Transverse colon (tissue), 4 donors: ENCODE measurements at regions of chr5 and their contacts with region 1.

Region 1: DNA sequence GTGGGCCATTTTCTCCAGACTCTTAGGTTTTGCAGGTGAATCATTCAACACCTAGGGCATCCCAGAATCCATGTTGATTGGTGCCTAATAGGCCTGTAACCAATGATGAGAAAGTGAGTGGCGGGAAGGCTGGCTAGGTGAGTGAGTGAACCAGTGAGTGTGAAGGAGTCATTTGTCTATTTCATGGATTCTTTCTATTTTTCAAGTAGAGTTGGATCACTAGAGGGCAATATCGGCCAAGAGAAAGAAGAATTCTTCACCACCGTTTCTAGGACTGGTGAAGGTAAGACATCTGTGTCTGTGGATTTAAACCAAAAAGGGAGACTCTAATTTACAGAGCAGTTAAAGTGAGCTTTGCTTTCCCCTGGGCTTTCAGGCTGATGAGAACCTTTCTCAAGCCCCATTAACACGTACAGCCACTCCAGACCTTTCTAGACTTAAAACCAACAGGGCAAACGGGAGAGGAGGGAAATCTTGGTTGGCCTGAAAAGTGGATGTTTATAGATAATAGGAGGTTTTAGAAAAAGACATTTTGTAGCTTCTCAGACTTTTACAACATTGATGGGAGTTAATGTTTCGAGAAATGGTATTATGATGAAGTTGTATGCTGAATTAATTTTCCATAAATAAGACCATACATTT is 114.3 kb upstream of the IL12B start:
- DNase-seq: no peak
- H3K4me3 ChIP-seq: no peak overlapping the region
- H3K27ac ChIP-seq: no peak overlapping the region
- H3K4me1 ChIP-seq: no peaks in the 10 kb centered on the region
- H3K27me3 ChIP-seq: no peaks in the 10 kb centered on the region
- CTCF ChIP-seq: peak in 2 of 5 experiments; percentile 29 to 32
- EP300 ChIP-seq: no peak
- POLR2A ChIP-seq: no peak

Region 2: DNA sequence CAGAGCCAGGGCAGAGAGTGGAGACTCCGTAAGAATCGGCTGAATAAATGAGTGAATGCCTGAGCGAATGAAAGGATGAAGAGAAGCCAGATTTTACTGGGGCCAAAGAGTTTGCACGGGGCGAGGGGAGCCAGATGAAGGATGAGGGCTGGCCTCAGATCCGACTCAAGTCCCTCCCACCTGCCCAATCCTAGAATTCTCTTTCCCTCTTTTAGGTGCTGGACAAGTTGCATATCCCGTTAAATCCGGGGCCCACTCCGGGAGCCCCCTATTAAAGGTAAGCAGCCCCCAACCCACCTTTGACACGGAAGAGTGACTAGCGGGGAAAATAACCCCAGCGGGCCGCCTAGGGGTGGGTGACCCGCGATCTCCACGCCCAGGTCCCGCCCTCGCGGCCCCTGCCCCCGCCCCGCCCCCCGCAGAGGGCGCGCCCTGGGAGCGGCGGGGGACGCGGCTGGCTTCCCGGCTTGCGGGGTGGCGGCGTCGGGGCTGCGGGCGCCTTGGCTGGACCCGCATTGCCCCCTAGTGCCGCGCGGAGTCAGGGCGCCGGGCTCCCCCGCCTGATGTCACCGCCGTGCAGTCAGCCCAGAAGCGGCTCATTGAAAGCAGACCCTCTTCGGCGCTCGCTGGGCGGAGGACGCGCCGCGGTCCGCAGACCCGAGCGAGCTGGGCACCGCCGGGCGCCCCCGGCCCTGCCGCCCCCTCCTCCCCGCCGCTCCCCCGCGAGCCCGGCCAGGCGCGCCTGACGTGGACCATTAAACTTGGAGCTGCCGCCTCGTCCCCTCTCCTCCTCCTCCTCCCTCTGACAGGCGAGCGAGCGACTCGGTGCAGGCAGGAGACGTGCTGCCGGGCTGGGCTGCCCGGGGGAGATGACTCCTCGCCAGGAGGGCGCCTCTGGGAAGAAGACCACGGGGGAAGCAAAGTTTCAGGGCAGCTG is 471.6 kb after region 1 on chr5 and contains the start of gene ADRA1B:
- in situ Hi-C with region 1: loop called in 1 of 4 experiments (anchors 10 kb)
- intact Hi-C with region 1: no loop called
- DNase-seq: peak; percentile 76
- H3K4me3 ChIP-seq: peak within 1 kb of the TSS in 3 of 4 donors; percentile 31 to 52 (median 45)
- H3K27ac ChIP-seq: peak within 1 kb of the TSS in 3 of 4 donors; percentile 5 to 36 (median 7)
- H3K4me1 ChIP-seq: peaks cover 0 to 27% (median 10%) of the 10 kb centered on the region in 4 donors
- H3K27me3 ChIP-seq: peaks cover 19% of the 10 kb centered on the region
- CTCF ChIP-seq: peak in 4 of 5 experiments; percentile 11 to 57 (median 45)
- EP300 ChIP-seq: no peak
- POLR2A ChIP-seq: no peak
- total RNA-seq, gene ADRA1B: 2.9 to 9.0 (median 5.0) TPM

Region 3: GRCh38 chr5:159965031-159965837 is 520.7 kb after region 1 on chr5:
- in situ Hi-C with region 1: loop called in 1 of 4 experiments (anchors 25 kb)
- intact Hi-C with region 1: no loop called
- DNase-seq: peak; percentile 50
- H3K4me3 ChIP-seq: no peak overlapping the region
- H3K27ac ChIP-seq: no peak overlapping the region
- H3K4me1 ChIP-seq: no peaks in the 10 kb centered on the region
- H3K27me3 ChIP-seq: peaks cover 15% of the 10 kb centered on the region
- CTCF ChIP-seq: peak; percentile 42 to 63 (median 54)
- EP300 ChIP-seq: no peak
- POLR2A ChIP-seq: no peak

Region 4: DNA sequence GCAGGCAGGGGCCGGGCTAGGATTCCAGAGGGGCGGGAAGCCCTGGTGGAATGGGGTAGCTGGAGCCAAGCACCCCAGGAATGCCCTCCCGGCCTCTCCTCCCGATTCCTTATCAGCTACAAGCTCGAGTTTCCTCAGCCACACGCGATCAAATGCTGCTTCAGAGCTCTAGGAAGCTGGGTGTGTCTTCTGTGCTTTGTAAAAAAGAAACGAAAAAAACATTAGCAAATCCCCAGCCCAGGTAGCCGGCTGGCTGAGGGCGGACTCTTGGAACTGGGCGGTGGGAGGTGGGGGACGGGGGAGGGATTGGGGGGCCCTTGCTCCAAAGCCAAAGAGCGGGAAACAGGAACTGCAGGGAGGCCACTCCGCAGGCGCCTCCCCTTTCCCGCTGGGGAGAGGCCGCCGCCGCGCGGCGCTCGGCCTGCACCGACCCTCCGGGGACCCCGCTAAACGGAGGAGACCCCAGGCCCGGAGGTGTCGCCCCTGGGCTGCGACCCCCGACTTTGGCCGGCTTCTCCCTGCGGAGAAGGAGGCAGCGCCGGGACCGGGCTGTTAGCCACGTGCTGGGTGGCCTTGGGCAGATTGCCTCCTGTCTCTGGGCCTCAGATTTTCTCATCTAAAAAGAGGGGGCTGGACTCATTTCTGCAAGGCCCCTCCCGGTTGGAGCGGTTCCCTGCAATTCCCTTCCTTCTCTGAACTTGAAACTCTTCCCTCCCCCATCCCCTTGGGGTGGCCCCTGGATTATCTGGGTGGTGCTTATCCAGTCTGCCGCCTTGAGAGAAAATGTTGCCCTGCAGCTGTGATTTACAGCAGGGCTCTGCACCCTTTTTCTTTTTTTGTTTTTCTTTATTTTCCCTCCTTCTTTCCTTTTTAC is 743.8 kb after region 1 on chr5:
- in situ Hi-C with region 1: no loop called
- intact Hi-C with region 1: no loop called
- DNase-seq: peak; percentile 44
- H3K4me3 ChIP-seq: peak overlapping the region; percentile 45 to 69 (median 48)
- H3K27ac ChIP-seq: peak overlapping the region; percentile 70 to 78 (median 76)
- H3K4me1 ChIP-seq: peaks cover 6 to 9% (median 8%) of the 10 kb centered on the region in 4 donors
- H3K27me3 ChIP-seq: peaks cover 3% of the 10 kb centered on the region
- CTCF ChIP-seq: no peak
- EP300 ChIP-seq: no peak
- POLR2A ChIP-seq: no peak